ENCODE measurements at regions of chr18 and their contacts with region 1.

Region 1: DNA sequence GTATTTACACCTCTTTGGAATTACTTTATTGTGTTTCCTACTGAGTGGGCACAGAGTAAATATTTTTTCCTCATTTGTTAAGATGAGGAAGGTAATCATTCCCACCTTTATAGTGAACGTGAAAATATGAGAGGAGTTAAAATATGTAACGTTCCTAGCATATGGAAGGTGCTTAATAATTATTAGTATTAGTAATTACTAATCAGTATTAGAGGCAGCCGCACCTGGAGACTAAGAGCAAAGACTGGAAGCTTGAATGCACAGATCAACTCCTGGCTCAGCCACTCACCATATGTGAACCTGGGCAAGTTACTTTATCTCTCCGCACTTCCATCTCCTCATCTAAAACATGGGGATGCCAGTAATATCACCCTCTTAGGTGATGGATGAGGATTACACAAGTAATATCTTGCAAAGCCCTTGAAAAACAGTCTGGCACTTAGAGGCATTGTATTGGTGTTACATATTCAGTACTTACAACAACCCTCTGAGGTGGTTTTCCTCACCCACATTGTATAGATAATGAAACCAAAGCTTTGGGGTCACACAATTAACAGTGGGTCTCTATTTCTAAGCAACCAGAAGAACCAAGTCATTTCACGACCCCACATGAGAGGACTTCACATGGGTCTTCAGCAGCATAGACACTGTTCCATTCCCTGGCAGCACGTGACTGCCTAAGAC is 100.3 kb upstream of the KCTD1 start:
- DNase-seq: no peak
- H3K4me3 Mint-ChIP-seq: no peak overlapping the region
- H3K27ac Mint-ChIP-seq: no peak overlapping the region
- H3K4me1 Mint-ChIP-seq: no peaks in the 10 kb centered on the region
- H3K27me3 Mint-ChIP-seq: peaks cover 40% of the 10 kb centered on the region

Region 2: GRCh38 chr18:26307189-26307773 is 341.4 kb before region 1 on chr18:
- intact Hi-C with region 1: loop called (anchors 1 kb)
- DNase-seq: no peak
- H3K4me3 Mint-ChIP-seq: no peak overlapping the region
- H3K27ac Mint-ChIP-seq: no peak overlapping the region
- H3K4me1 Mint-ChIP-seq: no peaks in the 10 kb centered on the region
- H3K27me3 Mint-ChIP-seq: no peaks in the 10 kb centered on the region

Region 3: DNA sequence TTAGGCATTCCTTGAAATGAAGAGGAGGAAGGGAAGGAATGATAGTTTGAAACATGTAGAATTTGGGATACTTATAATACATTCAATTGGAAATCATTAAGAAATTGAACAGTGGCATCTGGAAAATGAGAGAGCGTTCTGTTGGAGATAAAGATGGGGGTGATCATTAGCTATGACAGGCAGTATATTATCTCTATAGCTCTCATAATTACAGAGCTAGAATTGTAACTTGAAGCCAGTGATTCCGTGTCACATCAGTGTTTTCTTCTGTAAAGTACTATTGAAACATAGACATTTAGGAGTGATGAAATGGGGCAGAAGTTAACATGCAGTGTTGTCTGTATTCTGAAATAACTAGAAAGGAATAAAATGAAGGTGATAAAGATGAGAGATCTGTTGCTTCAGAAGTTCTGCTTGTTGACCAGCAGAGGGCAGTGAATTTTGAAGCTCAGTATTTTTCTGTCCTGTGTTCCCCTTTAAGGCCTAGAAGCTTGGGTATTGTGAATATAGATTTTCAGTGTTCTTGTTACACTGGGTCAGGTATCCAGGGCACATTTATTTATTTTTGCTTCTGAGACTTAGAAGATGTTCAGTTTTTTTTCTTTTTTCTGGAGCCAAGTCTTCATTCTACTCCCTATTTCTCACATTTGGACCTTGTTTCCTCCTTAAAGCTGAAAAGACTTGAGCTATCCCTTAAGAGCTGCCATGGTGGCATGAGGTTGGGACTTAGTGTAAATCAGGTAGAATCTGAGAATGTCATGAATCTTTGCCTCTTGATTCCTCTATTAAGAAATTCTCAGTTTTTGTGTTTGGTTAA is 265.0 kb before region 1 on chr18:
- intact Hi-C with region 1: loop called (anchors 1 kb)
- DNase-seq: no peak
- H3K4me3 Mint-ChIP-seq: no peak overlapping the region
- H3K27ac Mint-ChIP-seq: no peak overlapping the region
- H3K4me1 Mint-ChIP-seq: no peaks in the 10 kb centered on the region
- H3K27me3 Mint-ChIP-seq: no peaks in the 10 kb centered on the region

Region 4: DNA sequence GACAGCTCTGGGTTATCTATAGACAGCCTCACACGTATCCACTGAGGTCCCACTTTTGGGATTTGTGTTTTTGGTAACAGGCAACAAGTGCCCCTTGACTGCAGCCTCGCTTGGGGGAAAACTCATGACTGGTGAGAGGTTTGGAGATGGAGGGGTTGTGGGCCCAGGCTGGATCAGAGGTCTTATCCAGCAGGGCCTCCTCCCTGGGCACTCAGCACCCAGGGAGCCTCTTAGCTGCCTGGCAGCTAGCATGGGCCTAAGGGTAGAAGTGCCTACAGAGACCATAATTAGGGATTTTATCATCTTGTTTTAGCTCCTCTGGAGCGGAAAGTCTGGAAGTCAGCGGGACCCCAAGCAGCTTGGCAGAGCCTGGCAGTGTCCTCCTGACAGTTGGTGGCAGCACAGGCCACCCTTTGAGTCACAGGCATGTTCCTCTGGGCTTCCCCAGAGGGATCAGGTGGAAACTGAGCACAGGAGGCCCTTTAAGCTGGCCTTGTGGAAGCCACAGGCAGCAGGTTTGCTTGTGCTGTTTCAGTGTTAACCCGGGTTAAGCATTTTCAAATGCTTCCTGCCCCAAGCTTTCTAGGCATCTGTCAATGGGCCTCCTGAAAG is 243.4 kb before region 1 on chr18:
- intact Hi-C with region 1: loop called (anchors 1 kb)
- DNase-seq: no peak
- H3K4me3 Mint-ChIP-seq: no peak overlapping the region
- H3K27ac Mint-ChIP-seq: no peak overlapping the region
- H3K4me1 Mint-ChIP-seq: no peaks in the 10 kb centered on the region
- H3K27me3 Mint-ChIP-seq: no peaks in the 10 kb centered on the region

Region 5: GRCh38 chr18:26621161-26622026 is 27.3 kb before region 1 on chr18:
- intact Hi-C with region 1: loop called (anchors 1 kb)
- DNase-seq: no peak
- H3K4me3 Mint-ChIP-seq: peak overlapping the region; percentile 24
- H3K27ac Mint-ChIP-seq: no peak overlapping the region
- H3K4me1 Mint-ChIP-seq: no peaks in the 10 kb centered on the region
- H3K27me3 Mint-ChIP-seq: no peaks in the 10 kb centered on the region

Region 6: DNA sequence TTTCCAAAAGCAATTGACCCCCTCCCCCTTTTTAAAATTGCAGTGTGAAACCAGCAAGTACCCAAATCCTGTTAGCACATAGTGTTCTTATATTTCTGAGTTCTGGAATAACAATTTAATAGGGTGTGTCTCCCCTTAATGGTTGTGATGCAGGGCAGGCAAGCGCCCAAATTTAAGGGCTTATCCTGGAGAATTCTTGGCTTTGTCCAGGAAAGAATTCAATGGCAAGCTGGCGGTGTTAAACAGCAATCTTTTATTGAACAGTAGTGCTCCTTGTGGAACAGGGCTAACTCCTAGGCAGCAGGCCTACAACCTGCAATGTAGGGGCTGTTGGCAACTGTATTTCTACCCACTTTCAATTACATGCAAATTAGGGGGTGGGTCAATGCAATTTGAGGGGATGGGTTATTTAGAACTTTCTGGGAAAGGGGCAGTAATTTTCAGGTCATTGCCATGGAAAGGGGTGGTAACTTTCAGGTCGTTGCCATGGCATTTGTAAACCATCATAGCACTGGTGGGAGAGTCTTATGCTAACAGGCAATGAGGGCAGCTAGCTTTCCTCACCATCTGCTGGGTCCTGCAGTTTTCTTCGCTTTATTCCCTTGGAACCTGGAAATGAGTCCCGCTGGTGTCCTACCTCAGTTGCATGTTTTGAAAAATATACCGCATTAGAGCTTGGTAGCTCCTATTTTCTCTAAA is 48.7 kb after region 1 on chr18:
- intact Hi-C with region 1: loop called (anchors 5 kb)
- DNase-seq: no peak
- H3K4me3 Mint-ChIP-seq: no peak overlapping the region
- H3K27ac Mint-ChIP-seq: no peak overlapping the region
- H3K4me1 Mint-ChIP-seq: no peaks in the 10 kb centered on the region
- H3K27me3 Mint-ChIP-seq: no peaks in the 10 kb centered on the region

Region 7: DNA sequence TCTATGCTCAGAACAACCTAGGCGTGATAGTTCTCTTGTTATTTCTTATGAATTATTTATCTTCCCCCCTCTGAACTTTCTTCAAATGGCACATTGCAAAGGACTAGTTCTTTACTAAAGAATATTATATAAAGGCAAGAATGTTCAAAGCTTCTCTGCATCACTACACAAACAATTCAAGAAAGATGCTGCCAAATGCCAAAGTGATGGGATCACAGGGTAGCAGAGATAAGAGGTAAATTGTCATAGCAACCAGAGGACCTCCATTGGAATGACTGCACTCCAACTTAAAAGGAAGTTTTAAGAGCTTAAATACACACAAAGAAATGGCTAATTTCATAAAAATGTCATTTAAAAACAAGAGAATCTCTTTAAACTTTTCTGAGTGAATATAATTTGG is 144.0 kb after region 1 on chr18:
- intact Hi-C with region 1: no loop called
- DNase-seq: no peak
- H3K4me3 Mint-ChIP-seq: no peak overlapping the region
- H3K27ac Mint-ChIP-seq: no peak overlapping the region
- H3K4me1 Mint-ChIP-seq: no peaks in the 10 kb centered on the region
- H3K27me3 Mint-ChIP-seq: no peaks in the 10 kb centered on the region

Region 8: DNA sequence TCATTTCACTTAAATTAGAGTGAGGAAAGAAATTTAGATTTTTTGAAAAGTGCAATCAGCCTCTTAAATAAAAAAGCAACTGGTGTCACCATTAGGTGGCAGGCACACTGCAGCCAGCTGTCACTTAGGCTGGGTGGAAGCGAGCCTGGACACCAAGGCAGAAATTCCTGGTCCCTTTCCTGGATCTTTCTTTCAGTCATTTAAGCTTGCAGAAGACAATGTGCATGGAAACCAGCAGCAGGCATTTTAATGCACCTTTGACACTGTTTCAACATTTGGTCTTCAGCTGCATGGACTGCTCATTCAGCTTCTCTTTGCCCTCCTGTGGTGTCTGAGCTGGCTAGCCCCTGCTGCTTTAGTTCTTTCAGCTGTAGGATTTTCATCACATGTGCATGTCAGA is 155.9 kb after region 1 on chr18:
- intact Hi-C with region 1: no loop called
- DNase-seq: no peak
- H3K4me3 Mint-ChIP-seq: no peak overlapping the region
- H3K27ac Mint-ChIP-seq: no peak overlapping the region
- H3K4me1 Mint-ChIP-seq: no peaks in the 10 kb centered on the region
- H3K27me3 Mint-ChIP-seq: no peaks in the 10 kb centered on the region

Region 9: DNA sequence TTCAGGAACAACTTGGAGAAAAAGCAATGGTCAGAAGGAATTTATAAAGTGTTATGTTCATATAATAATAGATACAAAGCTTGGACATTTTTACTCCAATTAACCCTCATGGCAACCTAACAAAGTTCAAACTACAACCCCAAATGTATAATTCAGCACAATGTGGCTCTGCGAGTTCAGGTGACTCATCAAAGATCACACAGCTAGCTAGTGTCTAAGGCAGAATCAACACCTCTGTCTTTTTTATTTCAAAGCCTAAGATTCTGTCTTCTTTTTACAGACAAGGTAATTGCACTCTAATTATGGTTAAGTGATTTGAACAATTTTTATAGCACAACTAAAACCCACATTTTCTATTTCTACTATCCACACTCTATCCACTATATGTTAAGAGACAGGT is 446.0 kb after region 1 on chr18:
- intact Hi-C with region 1: no loop called
- DNase-seq: no peak
- H3K4me3 Mint-ChIP-seq: no peak overlapping the region
- H3K27ac Mint-ChIP-seq: no peak overlapping the region
- H3K4me1 Mint-ChIP-seq: no peaks in the 10 kb centered on the region
- H3K27me3 Mint-ChIP-seq: peaks cover 1% of the 10 kb centered on the region

Measured in activated T-helper 1 cell treated with anti-CD3 and anti-CD28 coated beads, Interleukin-12 subunit alpha, Interleukin-12 subunit beta, Interleukin-2, Interleukin-4 antibody, amounts not matched to agents 30 ng/mL and 10 ng/mL and 1 ng/mL, durations not matched to agents 14 hours and 24 hours and 36 hours (primary cell).